Mammary epithelial cell (primary cell): ENCODE measurements at regions of chr1 and their contacts with region 1.

Region 1: DNA sequence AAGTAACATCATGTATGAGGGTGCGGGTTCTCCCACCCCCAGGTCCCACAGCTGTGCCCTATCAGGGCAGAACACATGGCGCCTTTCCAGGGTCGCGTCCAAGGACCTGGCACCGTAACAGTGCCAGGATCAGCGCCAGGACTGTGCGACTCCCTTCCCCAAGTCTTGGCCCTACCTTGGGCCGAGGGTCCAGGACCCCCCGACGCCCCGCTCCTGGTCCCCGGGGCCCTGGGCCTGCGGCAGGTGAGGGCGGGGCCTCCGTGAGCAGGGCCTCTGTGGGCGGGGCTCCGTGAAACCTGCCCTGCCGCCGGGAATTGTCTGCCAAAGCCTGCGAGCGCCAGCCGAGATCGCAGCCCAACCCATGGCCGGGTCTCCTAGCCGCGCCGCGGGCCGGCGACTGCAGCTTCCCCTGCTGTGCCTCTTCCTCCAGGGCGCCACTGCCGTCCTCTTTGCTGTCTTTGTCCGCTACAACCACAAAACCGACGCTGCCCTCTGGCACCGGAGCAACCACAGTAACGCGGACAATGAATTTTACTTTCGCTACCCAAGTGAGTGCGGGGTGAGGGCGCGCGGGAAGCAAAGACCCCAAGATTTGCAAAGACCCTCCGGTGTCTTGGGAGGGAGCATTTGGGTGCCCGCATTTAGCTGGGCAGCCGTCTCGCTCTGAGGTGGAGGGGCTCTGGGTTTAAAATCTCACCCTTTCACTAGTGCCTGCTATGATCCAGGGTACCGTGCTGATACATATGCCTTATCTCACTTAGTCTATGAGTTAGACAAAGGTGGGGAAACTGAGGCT is at the start of gene RHBG:
- DNase-seq: peak; percentile 35
- H3K4me3 ChIP-seq: peak within 1 kb of the TSS; percentile 41 to 58 (median 56)
- H3K27ac ChIP-seq: no peak within 1 kb of the TSS
- H3K4me1 ChIP-seq: peaks cover 5% of the 10 kb centered on the region
- H3K27me3 ChIP-seq: no peaks in the 10 kb centered on the region
- CTCF ChIP-seq: no peak
- total RNA-seq, gene RHBG: not detected

Region 2: GRCh38 chr1:156401681-156402081 is 32.6 kb after region 1 on chr1:
- CTCF ChIA-PET with region 1: no interaction called
- dilution Hi-C with region 1: loop called (anchors 5 kb)
- in situ Hi-C with region 1: no loop called
- intact Hi-C with region 1: no loop called
- DNase-seq: no peak
- H3K4me3 ChIP-seq: no peak overlapping the region
- H3K27ac ChIP-seq: no peak overlapping the region
- H3K4me1 ChIP-seq: no peaks in the 10 kb centered on the region
- H3K27me3 ChIP-seq: peaks cover 2% of the 10 kb centered on the region
- CTCF ChIP-seq: no peak

Region 3: DNA sequence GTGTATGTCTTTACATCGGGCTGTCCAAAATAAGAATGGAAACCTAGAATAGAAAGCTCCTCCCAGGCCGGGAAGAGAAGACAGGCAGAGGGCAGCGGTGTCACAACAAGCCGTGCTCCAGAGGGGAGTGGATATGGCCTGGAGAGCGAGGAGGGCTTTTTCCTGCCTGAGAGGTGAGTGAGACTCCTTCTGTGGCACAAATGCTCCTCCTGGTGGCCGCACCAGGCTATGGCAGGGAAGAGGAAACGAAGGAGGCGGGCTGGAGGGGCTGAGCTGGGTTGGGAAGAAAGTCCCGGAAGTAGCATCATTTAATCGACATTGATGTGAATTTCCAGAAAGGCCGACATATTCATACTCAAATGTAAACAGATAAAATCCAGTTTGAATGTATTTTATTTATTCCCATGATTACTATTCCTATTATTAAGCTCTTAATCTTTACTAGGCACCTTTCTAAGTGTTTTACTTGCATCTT is 76.7 kb after region 1 on chr1:
- CTCF ChIA-PET with region 1: no interaction called
- dilution Hi-C with region 1: no loop called
- in situ Hi-C with region 1: no loop called
- intact Hi-C with region 1: no loop called
- DNase-seq: peak; percentile 73
- H3K4me3 ChIP-seq: no peak overlapping the region
- H3K27ac ChIP-seq: no peak overlapping the region
- H3K4me1 ChIP-seq: peaks cover 4% of the 10 kb centered on the region
- H3K27me3 ChIP-seq: no peaks in the 10 kb centered on the region
- CTCF ChIP-seq: peak; percentile 98 to 99

Region 4: DNA sequence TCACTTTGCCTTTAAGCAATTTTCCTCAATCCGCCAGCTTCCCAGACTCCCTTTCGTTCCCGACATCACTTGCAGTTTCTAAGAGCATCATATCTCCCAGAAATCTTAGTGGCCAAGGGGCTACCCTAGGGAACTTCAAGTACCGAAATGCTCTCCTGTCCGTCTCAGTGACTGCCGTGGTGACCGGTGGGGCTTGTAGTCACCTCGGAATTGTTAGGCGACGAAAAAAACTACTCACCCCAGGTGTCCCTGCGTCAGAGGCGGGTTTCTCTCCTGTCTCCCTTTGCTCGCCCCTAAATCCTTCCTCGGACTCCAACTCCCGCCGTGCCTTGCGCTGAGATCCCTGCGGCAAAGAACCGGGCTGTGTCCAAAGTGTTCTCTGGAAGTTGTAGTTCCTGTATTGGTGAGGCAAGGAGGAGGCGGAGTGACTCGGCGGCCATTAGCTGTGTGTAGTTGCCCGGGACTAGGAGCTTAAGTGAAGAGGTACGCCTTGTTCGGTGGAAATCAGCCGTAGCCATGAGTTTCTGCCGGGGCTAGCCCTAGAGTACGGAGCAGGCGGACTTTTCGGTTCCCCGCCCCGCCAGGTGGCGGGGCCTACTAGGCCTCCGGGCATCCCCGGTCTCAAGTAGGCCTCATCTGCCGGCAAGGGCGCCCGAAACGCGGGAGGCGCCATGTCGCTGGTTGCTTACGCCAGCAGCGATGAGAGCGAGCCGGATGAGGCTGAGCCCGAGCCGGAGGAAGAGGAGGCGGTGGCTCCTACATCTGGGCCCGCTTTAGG is 398.2 kb after region 1 on chr1 and contains the start of gene PRCC:
- CTCF ChIA-PET with region 1: no interaction called
- dilution Hi-C with region 1: no loop called
- in situ Hi-C with region 1: no loop called
- intact Hi-C with region 1: no loop called
- DNase-seq: peak; percentile 100
- H3K4me3 ChIP-seq: peak within 1 kb of the TSS; percentile 65 to 99 (median 91)
- H3K27ac ChIP-seq: peak within 1 kb of the TSS; percentile 86
- H3K4me1 ChIP-seq: peaks cover 20% of the 10 kb centered on the region
- H3K27me3 ChIP-seq: no peaks in the 10 kb centered on the region
- CTCF ChIP-seq: no peak
- total RNA-seq, gene PRCC: 22.2 to 69.7 TPM